ENCODE measurements at regions of chr1 and their contacts with region 1.

Region 1: GRCh38 chr1:192808518-192809306 is at the start of gene RGS2:
- DNase-seq: peak; percentile 86
- total RNA-seq, gene RGS2: 12.4 and 12.5 TPM in 2 replicates

Region 2: DNA sequence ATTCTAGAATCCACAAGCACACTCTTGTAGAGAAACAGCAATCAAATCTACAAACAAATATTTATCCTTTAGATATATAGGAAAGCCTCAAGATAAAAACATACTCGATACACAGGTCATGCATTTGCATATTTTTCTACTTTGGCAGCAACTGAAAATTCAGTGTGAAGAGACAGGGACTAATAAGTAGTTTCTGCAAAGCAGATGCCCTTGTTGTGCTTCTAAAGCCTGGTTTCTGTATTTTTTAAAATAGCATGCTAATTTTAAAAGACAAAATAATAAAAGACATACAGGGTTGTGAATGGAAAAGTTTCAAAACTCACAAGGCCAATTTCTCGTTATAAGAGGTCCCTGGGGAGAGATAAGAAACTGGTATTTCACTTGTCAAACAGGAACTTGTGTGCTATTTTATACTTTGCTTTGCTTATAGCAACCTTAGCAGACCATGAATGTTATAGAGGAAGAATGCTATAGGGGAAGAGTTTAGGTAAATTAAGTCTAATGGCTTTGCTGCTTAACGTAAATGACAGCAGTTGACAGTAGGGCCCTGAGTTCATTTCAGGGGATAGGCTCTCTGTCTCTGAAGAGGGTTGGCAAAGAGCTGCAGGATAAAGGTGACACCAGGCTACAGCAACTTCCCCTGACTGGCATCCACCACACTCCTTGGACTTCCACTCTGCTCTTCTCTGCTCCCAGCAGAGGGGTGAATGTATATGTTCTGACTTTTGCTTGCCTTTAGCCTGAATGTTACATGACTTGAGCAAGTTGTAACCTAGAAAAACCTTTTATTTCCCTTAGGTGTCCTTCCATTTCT is 182.1 kb before region 1 on chr1:
- in situ Hi-C with region 1: no loop called
- DNase-seq: no peak

Region 3: DNA sequence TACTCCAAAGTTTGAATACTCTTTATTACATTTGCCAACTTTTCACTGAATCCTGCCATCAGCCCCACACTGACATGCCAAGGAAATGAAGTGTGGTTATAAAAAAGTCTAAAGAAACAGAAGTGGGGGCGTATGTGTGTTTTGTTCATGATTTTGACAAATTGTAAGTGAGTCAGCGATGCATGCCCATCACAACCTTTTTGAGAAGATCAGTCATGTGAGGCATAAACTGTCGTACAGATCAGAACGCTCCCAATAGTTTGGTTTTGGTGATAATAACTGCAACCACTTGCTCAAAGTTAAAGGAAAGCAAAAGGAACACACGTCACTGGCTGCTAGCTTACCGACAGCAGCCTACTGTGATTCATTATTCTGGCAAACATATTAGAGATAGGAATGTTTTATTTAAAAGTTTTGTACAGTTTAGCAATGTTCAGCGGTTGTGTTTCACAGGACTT is 95.8 kb after region 1 on chr1:
- in situ Hi-C with region 1: loop called (anchors 25 kb)
- DNase-seq: peak; percentile 40

Region 4: DNA sequence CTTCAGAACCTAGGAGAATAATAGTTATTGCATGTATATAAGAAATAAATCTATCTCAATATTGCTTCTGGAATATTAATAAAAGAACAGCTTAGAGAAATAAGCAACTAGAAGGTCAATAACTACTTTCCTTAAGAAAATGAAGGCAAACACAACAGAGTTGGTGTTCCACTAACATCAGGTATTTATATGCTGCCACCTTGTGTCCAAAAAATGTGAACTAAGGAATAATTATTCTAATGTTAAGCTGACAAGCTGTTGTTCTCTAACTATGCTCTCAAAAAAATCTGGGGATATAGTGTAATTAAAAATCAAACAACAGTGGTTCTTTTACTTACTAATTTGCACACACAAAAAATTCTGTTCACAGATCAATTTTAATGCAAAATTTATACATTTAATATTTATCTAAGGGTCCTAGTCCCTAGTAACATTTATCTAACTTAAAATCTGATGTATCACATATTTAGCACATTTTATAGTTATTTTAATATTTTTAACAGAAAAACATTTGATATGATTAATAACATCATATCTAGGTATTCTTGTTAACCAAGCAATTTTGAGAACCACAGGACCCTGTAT is 210.8 kb after region 1 on chr1:
- in situ Hi-C with region 1: loop called (anchors 25 kb)
- DNase-seq: peak; percentile 61